ENCODE measurements at regions of chr1 and their contacts with region 1.

Region 1: GRCh38 chr1:35202048-35202719 is 9.2 kb upstream of the SFPQ start:
- DNase-seq: peak; percentile 90
- H3K4me3 ChIP-seq: no peak overlapping the region
- H3K27ac ChIP-seq: no peak overlapping the region
- H3K4me1 ChIP-seq: peaks cover 7% of the 10 kb centered on the region
- H3K27me3 ChIP-seq: no peaks in the 10 kb centered on the region
- CTCF ChIP-seq: peak; percentile 91

Region 2: GRCh38 chr1:34950428-34950827 is 251.8 kb before region 1 on chr1:
- CTCF ChIA-PET with region 1: no interaction called
- POLR2A ChIA-PET with region 1: no interaction called
- intact Hi-C with region 1: no loop called
- DNase-seq: no peak
- H3K4me3 ChIP-seq: no peak overlapping the region
- H3K27ac ChIP-seq: no peak overlapping the region
- H3K4me1 ChIP-seq: no peaks in the 10 kb centered on the region
- H3K27me3 ChIP-seq: peaks cover 6% of the 10 kb centered on the region
- CTCF ChIP-seq: no peak

Region 3: GRCh38 chr1:35316264-35316663 is 114.1 kb after region 1 on chr1:
- CTCF ChIA-PET with region 1: interaction called, 3 read pairs
- POLR2A ChIA-PET with region 1: interaction called, 16 read pairs
- intact Hi-C with region 1: no loop called
- DNase-seq: no peak
- H3K4me3 ChIP-seq: no peak overlapping the region
- H3K27ac ChIP-seq: no peak overlapping the region
- H3K4me1 ChIP-seq: no peaks in the 10 kb centered on the region
- H3K27me3 ChIP-seq: no peaks in the 10 kb centered on the region
- CTCF ChIP-seq: no peak

Region 4: GRCh38 chr1:35443768-35444518 is 241.8 kb after region 1 on chr1:
- CTCF ChIA-PET with region 1: interaction called, 4 read pairs
- POLR2A ChIA-PET with region 1: no interaction called
- intact Hi-C with region 1: loop called (anchors 1 kb)
- DNase-seq: peak; percentile 50
- H3K4me3 ChIP-seq: no peak overlapping the region
- H3K27ac ChIP-seq: no peak overlapping the region
- H3K4me1 ChIP-seq: no peaks in the 10 kb centered on the region
- H3K27me3 ChIP-seq: no peaks in the 10 kb centered on the region
- CTCF ChIP-seq: peak; percentile 52